ENCODE measurements at regions of chr16 and their contacts with region 1.

Region 1: DNA sequence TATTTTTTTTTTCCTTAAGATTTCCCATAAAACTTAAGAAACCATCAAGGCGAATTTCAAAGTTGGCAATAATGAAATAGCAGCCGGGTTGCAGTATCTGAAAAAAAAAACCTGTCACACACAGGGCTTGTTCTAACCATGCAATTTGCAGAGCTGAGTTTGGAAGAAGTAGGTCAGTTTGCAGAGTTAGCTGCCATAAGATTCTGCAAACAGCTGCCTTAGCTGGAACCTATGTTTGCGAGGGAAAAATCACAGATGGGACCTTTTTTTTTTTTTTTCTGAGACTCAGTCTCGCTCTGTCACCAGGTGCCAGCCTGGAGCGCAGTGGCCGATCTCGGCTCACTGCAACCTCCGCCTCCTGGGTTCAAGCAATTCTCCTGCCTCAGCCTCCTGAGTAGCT is 98.5 kb upstream of the HS3ST4 start:
- DNase-seq: no peak
- ATAC-seq: no peak
- H3K4me3 ChIP-seq: no peak overlapping the region
- H3K27ac ChIP-seq: no peak overlapping the region
- H3K4me1 ChIP-seq: no peaks in the 10 kb centered on the region
- H3K27me3 ChIP-seq: no peaks in the 10 kb centered on the region
- CTCF ChIP-seq: no peak

Region 2: GRCh38 chr16:24745391-24745790 is 847.9 kb before region 1 on chr16:
- CTCF ChIA-PET with region 1: no interaction called
- POLR2A ChIA-PET with region 1: interaction called, 11 read pairs
- intact Hi-C with region 1: no loop called
- DNase-seq: no peak
- ATAC-seq: no peak
- H3K4me3 ChIP-seq: no peak overlapping the region
- H3K27ac ChIP-seq: no peak overlapping the region
- H3K4me1 ChIP-seq: peaks cover 16% of the 10 kb centered on the region
- H3K27me3 ChIP-seq: no peaks in the 10 kb centered on the region
- CTCF ChIP-seq: no peak

Region 3: GRCh38 chr16:26019381-26020242 is 426.4 kb after region 1 on chr16:
- CTCF ChIA-PET with region 1: no interaction called
- POLR2A ChIA-PET with region 1: no interaction called
- intact Hi-C with region 1: no loop called
- DNase-seq: no peak
- ATAC-seq: no peak
- H3K4me3 ChIP-seq: no peak overlapping the region
- H3K27ac ChIP-seq: no peak overlapping the region
- H3K4me1 ChIP-seq: no peaks in the 10 kb centered on the region
- H3K27me3 ChIP-seq: no peaks in the 10 kb centered on the region
- CTCF ChIP-seq: no peak

Measured in PC-3 (cell line).